ENCODE measurements at regions of chr9 and their contacts with region 1.

Region 1: DNA sequence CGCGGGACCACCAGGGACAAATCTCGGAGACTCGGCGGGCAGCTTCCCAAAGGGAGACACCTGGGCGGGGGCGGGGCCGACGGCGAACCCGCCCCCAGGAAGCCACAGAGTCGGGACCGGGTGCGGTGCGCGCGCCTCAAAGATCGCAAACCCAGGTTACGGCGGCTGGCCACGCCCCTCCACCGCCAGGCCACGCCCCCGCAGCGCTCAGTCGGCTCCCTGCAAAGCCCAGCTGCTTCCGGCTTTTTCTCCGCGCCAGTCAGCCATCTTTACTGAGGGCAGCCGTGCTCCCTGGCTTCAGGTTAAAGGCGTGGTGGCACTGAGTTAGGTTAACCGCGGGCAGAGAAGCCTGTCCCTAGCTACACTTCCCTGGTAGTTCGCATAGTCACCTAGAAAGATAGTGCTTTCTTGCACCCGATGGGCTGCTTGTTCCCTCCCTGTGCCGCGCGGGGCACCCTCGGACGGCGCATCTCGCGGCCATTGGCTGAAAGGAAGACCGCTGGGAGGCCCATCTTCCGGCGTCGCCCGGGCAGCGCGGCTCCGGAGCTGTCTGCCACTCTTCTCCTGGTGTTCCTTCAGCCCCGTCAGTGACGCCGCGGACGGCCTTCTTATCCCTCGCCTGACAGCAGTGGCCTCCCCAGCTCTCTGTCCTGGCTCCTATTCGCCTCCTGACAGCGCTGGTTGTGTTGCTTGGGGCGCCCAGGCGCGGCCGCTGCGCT is at the start of gene TBC1D2:
- DNase-seq: peak; percentile 95 to 99 (median 98)
- ATAC-seq: peak; percentile 86
- H3K4me3 ChIP-seq: peak within 1 kb of the TSS; percentile 81
- H3K4me3 Mint-ChIP-seq: peak within 1 kb of the TSS; percentile 99
- H3K27ac ChIP-seq: peak within 1 kb of the TSS; percentile 79 to 83
- H3K27ac Mint-ChIP-seq: peak within 1 kb of the TSS; percentile 92
- H3K4me1 ChIP-seq: peaks cover 39% of the 10 kb centered on the region
- H3K4me1 Mint-ChIP-seq: peaks cover 34% of the 10 kb centered on the region
- H3K27me3 ChIP-seq: no peaks in the 10 kb centered on the region
- H3K27me3 Mint-ChIP-seq: no peaks in the 10 kb centered on the region
- CTCF ChIP-seq: peak; percentile 11
- total RNA-seq, gene TBC1D2: 2.9 to 4.0 TPM

Region 2: GRCh38 chr9:96854073-96854876 is 1401.5 kb before region 1 on chr9 and contains the start of gene ZNF782:
- CTCF ChIA-PET with region 1: no interaction called
- POLR2A ChIA-PET with region 1: no interaction called
- intact Hi-C with region 1: loop called in 1 of 2 experiments (anchors 5 kb)
- DNase-seq: peak; percentile 67 to 93 (median 78)
- ATAC-seq: peak; percentile 88
- H3K4me3 ChIP-seq: peak within 1 kb of the TSS; percentile 87
- H3K4me3 Mint-ChIP-seq: peak within 1 kb of the TSS; percentile 100
- H3K27ac ChIP-seq: peak within 1 kb of the TSS; percentile 26 to 58
- H3K27ac Mint-ChIP-seq: peak within 1 kb of the TSS; percentile 88
- H3K4me1 ChIP-seq: peaks cover 24% of the 10 kb centered on the region
- H3K4me1 Mint-ChIP-seq: peaks cover 58% of the 10 kb centered on the region
- H3K27me3 ChIP-seq: no peaks in the 10 kb centered on the region
- H3K27me3 Mint-ChIP-seq: no peaks in the 10 kb centered on the region
- CTCF ChIP-seq: no peak
- total RNA-seq, gene ZNF782: 4.3 to 4.9 TPM

Region 3: GRCh38 chr9:97696803-97697601 is 558.7 kb before region 1 on chr9 and contains the start of gene XPA:
- CTCF ChIA-PET with region 1: no interaction called
- POLR2A ChIA-PET with region 1: interaction called, 18 read pairs
- intact Hi-C with region 1: loop called in 1 of 2 experiments (anchors 5 kb)
- DNase-seq: peak; percentile 94 to 99 (median 97)
- ATAC-seq: peak; percentile 92
- H3K4me3 ChIP-seq: peak within 1 kb of the TSS; percentile 83
- H3K4me3 Mint-ChIP-seq: peak within 1 kb of the TSS; percentile 87
- H3K27ac ChIP-seq: peak within 1 kb of the TSS; percentile 80 to 81
- H3K27ac Mint-ChIP-seq: peak within 1 kb of the TSS; percentile 86
- H3K4me1 ChIP-seq: peaks cover 26% of the 10 kb centered on the region
- H3K4me1 Mint-ChIP-seq: peaks cover 62% of the 10 kb centered on the region
- H3K27me3 ChIP-seq: no peaks in the 10 kb centered on the region
- H3K27me3 Mint-ChIP-seq: peaks cover 4% of the 10 kb centered on the region
- CTCF ChIP-seq: no peak
- total RNA-seq, gene XPA: 20.2 to 23.3 TPM

Region 4: DNA sequence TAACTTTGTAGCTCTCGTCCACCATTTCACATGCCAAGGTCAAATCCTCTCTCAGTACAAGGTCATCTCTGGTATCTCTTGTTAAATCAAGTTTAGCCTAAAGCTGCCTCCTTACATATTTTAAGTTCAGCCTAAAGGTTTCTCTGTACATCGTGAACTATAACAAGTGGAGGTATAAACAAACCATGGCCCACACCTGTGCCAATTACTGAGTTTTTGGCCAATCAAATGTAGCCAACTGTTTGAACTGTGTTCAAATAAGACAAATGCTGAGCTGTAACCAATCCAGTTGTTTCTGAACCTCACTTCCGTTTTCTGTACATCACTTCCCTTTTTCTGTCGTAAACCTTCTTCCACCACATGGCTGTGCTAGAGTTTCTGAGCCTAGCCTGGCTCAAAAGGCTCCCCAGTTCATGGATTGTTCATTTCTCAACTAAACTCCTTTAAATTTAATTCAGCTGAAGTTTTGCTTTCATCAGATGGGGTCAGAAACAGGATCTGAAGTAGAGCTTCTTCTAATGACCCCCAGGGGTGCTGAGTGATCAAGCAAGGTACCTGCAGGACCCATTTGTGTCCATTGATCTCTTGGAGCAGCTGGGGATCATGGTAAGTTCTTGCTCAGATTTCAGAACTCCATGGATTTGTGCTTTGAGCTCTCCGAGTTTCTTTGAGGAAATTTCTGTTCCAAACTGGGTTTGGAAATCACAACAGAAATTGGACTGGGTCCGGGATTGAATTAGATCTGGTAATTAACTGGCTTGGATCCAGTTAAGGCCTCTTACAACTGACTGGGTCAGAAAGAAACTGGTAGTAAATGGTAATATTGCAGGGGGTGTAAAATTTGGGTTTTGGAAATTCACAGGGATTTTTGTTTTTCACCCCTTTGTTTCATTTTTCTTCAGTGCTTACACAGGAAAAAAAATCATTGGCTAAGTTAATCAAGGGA is 210.2 kb before region 1 on chr9:
- CTCF ChIA-PET with region 1: no interaction called
- POLR2A ChIA-PET with region 1: interaction called, 28 read pairs
- intact Hi-C with region 1: no loop called
- DNase-seq: peak in 9 of 14 experiments; percentile 3 to 87 (median 19)
- ATAC-seq: peak; percentile 98
- H3K4me3 ChIP-seq: peak overlapping the region; percentile 50
- H3K4me3 Mint-ChIP-seq: peak overlapping the region; percentile 45
- H3K27ac ChIP-seq: peak overlapping the region in 1 of 2 donors; percentile 61
- H3K27ac Mint-ChIP-seq: peak overlapping the region; percentile 86
- H3K4me1 ChIP-seq: peaks cover 17% of the 10 kb centered on the region
- H3K4me1 Mint-ChIP-seq: peaks cover 30% of the 10 kb centered on the region
- H3K27me3 ChIP-seq: no peaks in the 10 kb centered on the region
- H3K27me3 Mint-ChIP-seq: no peaks in the 10 kb centered on the region
- CTCF ChIP-seq: peak; percentile 18

Region 5: GRCh38 chr9:98101868-98102273 is 153.9 kb before region 1 on chr9:
- CTCF ChIA-PET with region 1: interaction called, 3 read pairs
- POLR2A ChIA-PET with region 1: interaction called, 64 read pairs
- intact Hi-C with region 1: loop called in 1 of 2 experiments (anchors 10 kb)
- DNase-seq: peak; percentile 63 to 96 (median 80)
- ATAC-seq: peak; percentile 94
- H3K4me3 ChIP-seq: peak overlapping the region; percentile 34
- H3K4me3 Mint-ChIP-seq: peak overlapping the region; percentile 71
- H3K27ac ChIP-seq: peak overlapping the region; percentile 74 to 79
- H3K27ac Mint-ChIP-seq: peak overlapping the region; percentile 91
- H3K4me1 ChIP-seq: peaks cover 95% of the 10 kb centered on the region
- H3K4me1 Mint-ChIP-seq: peaks cover 84% of the 10 kb centered on the region
- H3K27me3 ChIP-seq: no peaks in the 10 kb centered on the region
- H3K27me3 Mint-ChIP-seq: no peaks in the 10 kb centered on the region
- CTCF ChIP-seq: no peak

Region 6: DNA sequence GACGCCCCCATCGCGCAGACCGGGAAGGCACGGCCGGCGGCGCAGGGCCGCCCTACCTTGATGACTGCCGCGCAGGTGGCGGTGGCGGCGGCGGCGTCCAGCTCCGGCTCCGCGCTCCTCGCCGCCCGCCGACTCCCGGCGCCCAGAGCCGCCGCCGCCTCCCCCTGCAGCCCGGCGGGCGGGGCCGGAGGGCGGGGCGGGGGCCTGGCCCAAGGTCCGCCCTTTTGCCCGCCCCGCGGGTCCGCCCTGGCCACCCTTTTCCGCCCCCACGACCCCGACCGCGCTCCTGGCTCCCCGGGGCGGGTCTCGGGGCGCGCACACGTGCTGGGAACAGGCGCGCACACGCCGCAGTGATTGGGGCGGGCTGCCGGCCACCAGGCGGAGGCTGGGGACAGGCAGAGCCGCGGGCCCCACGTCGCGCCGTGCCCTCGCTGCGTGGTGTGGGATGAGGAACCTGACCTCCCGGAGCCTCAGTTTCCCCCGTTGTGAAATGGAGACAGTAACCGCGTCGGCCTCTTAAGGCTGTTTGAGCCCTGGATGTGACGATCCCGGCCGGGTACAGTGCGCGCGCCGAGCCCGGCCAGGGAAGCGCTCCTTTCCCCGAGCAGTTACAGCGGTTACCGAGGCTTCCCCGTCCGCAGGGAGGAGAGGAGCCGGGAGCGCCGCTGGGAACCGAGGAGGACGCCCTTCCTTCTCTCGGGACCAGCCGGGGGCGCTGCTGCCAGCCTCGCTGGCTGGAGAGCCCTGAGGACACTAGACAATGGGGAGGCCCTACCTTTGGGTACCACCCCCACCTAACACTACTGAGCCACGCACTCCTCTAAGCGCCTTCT is 63.0 kb before region 1 on chr9 and contains the start of gene CORO2A:
- CTCF ChIA-PET with region 1: no interaction called
- POLR2A ChIA-PET with region 1: interaction called, 57 read pairs
- intact Hi-C with region 1: no loop called
- DNase-seq: peak; percentile 36 to 86 (median 66)
- ATAC-seq: peak; percentile 65
- H3K4me3 ChIP-seq: peak within 1 kb of the TSS; percentile 80
- H3K4me3 Mint-ChIP-seq: peak within 1 kb of the TSS; percentile 89
- H3K27ac ChIP-seq: peak within 1 kb of the TSS in 1 of 2 donors; percentile 30
- H3K27ac Mint-ChIP-seq: peak within 1 kb of the TSS; percentile 76
- H3K4me1 ChIP-seq: peaks cover 31% of the 10 kb centered on the region
- H3K4me1 Mint-ChIP-seq: peaks cover 44% of the 10 kb centered on the region
- H3K27me3 ChIP-seq: no peaks in the 10 kb centered on the region
- H3K27me3 Mint-ChIP-seq: no peaks in the 10 kb centered on the region
- CTCF ChIP-seq: peak; percentile 29
- total RNA-seq, gene CORO2A: 6.8 to 8.5 TPM

Measured in CD4-positive, alpha-beta T cell (primary cell).